Aorta (tissue), 5 donors: ENCODE measurements at regions of chr6 and their contacts with region 1.

Region 1: GRCh38 chr6:125688138-125688537 is 61.3 kb upstream of the HEY2 start:
- DNase-seq: no peak
- ATAC-seq: no peak
- H3K4me3 ChIP-seq: no peak overlapping the region
- H3K27ac ChIP-seq: no peak overlapping the region
- H3K4me1 ChIP-seq: peaks cover 0 to 9% of the 10 kb centered on the region in 2 donors
- H3K27me3 ChIP-seq: no peaks in the 10 kb centered on the region

Region 2: DNA sequence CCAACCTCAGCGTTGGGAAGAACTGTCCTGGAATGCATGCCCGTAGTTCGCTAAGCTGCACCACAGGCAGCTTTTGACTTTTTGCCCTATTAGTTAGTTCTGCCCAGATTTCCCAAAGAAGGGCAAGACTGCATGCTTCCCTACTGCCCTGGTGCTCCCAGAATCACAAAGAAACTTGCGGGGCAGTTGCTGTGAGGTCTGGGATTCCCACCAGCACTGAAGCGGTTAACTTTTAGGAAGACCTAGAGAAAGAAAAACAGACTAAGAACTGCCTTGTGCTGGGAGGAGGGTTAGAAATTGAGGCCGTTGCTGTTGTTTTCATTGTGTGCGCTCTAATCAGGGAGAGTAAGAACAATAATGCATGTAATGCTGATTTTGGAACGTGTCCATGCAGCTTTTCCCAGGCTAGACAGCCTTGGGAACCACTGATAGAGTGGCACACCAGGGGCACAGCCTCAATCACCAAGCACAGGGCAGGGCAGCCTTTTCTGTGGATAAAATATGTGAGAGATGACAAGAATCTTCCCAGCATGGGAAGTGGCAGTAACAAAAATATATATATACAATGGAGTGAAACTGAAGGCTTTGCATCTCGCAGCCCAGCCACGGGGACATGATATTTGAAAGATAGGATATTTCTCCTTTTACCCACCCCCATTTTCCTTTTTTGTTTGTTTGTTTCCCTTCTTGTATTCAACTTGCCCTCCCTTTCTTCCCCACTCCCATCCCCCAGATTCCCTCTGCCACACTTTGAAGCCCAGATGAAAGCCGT is 76.4 kb before region 1 on chr6:
- intact Hi-C with region 1: loop called in 1 of 2 experiments (anchors 10 kb)
- DNase-seq: peak in 1 of 2 donors; percentile 51
- ATAC-seq: peak; percentile 91
- H3K4me3 ChIP-seq: peak overlapping the region in 1 of 2 donors; percentile 38
- H3K27ac ChIP-seq: peak overlapping the region; percentile 38 to 68
- H3K4me1 ChIP-seq: no peaks in the 10 kb centered on the region
- H3K27me3 ChIP-seq: no peaks in the 10 kb centered on the region